Activated CD4-positive, alpha-beta T cell treated with anti-CD3 and anti-CD28 coated beads for 36 hours (primary cell): ENCODE measurements at regions of chr1 and their contacts with region 1.

Region 1: DNA sequence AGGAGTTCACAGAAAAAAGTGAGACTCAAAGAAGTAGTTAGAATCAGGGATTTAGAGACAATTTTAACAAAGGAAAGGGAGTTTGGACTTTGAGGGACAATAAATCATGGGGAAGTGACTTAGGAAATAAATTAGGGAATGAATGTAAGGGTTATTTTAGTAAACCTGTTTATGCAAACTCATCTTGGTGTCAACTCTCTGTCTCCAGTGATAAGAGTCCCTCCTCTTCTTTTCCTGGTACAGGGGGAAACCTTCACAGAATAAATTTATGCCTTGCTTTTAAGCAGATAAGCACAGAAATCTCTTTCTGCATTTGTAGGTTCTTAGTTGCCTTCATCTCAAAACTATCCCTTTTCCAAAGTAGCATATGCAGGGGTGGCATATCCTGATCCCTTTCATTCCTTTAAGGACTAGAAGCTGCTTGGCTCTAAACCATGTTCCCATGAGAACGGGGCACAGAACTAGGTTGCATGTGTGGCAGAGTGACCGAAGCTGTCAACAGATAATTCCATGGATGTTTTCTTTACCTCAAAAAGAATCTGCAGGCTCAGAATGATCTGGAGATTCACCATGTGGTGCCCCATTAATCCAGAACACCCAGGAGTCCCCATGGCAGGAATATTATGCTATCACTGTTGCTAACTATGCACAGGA is 155.4 kb downstream of the ZNF648 start:
- DNase-seq: no peak
- ATAC-seq: no peak
- H3K4me3 Mint-ChIP-seq: no peak overlapping the region
- H3K27ac Mint-ChIP-seq: no peak overlapping the region
- H3K4me1 Mint-ChIP-seq: no peaks in the 10 kb centered on the region
- H3K27me3 Mint-ChIP-seq: peaks cover 14% of the 10 kb centered on the region

Region 2: GRCh38 chr1:181969902-181970301 is 63.8 kb after region 1 on chr1:
- CTCF ChIA-PET with region 1: no interaction called
- POLR2A ChIA-PET with region 1: no interaction called
- intact Hi-C with region 1: loop called in 1 of 2 experiments (anchors 10 kb)
- DNase-seq: no peak
- ATAC-seq: no peak
- H3K4me3 Mint-ChIP-seq: no peak overlapping the region
- H3K27ac Mint-ChIP-seq: no peak overlapping the region
- H3K4me1 Mint-ChIP-seq: no peaks in the 10 kb centered on the region
- H3K27me3 Mint-ChIP-seq: peaks cover 15% of the 10 kb centered on the region